Activated CD4-positive, alpha-beta T cell treated with anti-CD3 and anti-CD28 coated beads, Interleukin-2, amount 10 ng/mL, durations not matched to agents 24 days and 14 days (primary cell): ENCODE measurements at regions of chr3 and their contacts with region 1.

Region 1: DNA sequence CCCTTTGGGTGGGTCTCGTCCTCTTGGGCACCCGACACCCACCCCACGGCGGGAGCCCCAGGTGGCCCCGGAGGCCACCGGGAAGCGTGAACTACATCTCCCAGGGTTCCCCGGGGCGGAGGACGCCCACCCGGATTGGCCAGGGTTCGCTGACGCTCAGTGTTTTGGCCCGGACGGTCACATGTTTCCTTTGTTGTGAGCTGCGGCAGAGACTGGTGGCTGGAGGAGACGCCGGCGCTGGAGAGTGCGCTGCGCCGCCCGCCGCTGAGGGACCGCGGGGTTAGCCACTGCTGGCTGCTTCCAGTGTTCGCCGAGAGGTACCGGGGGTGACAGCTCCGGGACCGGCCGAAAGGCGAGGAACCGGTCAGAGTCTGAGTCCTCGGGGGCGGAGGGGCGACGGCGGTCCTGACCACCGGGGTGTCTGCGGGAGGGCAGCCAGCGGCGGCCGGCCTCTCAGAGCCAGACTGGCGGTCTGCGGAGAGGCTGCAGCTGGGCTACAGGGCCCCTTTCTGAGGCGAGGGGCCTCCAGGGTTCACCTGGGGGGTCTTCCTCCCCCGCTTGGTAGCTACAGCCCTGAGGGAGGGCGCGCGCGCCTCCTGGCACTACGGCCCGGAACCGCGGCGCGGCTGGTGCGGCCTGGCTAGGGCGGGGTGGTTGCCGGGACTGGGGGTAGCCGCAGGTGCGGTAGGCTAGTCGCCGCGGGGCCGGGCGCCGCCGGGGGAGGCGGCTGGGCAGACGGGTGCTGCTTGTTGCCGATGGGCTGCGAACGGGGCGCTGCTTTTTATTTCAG is at the start of gene KLHL24:
- DNase-seq: peak; percentile 97
- H3K4me3 Mint-ChIP-seq: peak within 1 kb of the TSS; percentile 94
- H3K27ac Mint-ChIP-seq: peak within 1 kb of the TSS; percentile 96
- H3K4me1 Mint-ChIP-seq: peaks cover 20% of the 10 kb centered on the region
- H3K27me3 Mint-ChIP-seq: no peaks in the 10 kb centered on the region
- total RNA-seq, gene KLHL24: 6.7 and 6.9 TPM in 2 replicates

Region 2: DNA sequence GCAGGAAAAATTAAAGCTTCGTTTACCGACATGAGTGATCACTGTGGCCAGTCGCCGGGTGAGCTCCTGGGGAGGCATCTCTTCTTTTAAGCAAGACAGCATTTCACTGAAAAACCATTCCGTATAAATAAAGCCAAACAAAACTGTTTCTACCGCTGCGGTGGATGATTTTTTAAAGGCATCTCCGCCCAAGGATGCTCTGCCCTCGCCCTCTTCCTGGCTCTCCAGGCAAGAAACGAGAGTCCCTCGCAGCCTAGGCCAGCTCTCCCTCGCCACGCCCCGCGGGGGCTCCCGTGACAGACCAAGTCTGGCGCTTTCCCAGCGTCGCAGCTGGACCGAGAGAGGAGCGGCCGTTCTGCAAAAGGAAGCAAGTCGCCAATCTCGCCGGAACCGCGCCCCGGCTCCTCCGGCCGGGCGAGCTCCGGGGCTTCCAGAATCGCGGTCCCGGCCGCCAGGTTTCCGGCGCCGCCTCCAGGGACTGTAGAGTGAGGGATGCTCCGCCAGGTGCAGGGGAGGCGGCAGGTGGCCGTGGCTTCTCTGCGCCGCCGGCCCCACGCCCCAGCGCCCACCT is 207.7 kb before region 1 on chr3:
- intact Hi-C with region 1: loop called (anchors 5 kb)
- DNase-seq: peak; percentile 82
- H3K4me3 Mint-ChIP-seq: peak overlapping the region; percentile 82
- H3K27ac Mint-ChIP-seq: peak overlapping the region; percentile 57
- H3K4me1 Mint-ChIP-seq: peaks cover 35% of the 10 kb centered on the region
- H3K27me3 Mint-ChIP-seq: peaks cover 2% of the 10 kb centered on the region

Region 3: DNA sequence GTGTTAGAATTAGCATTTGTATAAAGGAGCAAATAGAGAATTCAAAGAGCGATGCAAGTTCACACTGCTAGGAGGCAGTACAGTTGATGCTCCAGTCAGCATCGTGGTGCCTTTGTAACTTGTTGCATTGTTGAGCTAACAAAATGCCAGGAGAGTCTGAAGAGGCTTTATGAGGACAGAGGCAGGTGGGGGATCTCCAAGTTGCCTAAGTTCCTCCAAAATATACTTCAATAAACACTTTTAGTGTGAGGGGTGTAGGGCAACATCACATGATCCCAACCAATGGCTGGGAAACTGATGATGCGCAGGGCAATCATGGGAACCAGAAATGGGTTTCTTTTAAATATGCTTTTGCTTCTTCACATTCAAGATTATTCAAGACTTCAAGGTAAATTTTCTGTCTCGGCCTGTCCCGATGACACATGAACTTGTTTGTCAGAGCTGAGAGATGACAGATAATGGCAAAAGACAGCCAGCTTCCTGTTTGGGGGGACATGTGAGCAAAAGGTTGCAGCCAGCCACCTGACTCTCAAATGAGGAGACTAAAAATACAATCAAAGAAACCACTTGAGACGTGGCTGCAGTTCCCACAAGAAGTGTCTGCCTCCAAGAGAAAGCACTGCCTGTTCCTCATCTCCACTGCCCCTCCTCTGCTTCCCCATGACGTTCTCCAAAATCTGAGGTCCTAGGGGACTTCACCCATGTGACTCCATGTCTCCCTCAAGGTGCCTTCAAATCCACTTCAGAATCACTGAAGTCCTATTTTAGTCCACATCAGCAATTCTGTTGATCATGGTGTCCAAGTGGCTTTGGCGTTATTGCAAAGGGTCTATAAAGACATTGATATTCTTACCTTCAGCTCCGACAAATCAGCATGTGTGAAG is 119.4 kb before region 1 on chr3:
- intact Hi-C with region 1: loop called (anchors 5 kb)
- DNase-seq: peak; percentile 88
- H3K4me3 Mint-ChIP-seq: peak overlapping the region; percentile 39
- H3K27ac Mint-ChIP-seq: peak overlapping the region; percentile 90
- H3K4me1 Mint-ChIP-seq: peaks cover 67% of the 10 kb centered on the region
- H3K27me3 Mint-ChIP-seq: no peaks in the 10 kb centered on the region

Region 4: DNA sequence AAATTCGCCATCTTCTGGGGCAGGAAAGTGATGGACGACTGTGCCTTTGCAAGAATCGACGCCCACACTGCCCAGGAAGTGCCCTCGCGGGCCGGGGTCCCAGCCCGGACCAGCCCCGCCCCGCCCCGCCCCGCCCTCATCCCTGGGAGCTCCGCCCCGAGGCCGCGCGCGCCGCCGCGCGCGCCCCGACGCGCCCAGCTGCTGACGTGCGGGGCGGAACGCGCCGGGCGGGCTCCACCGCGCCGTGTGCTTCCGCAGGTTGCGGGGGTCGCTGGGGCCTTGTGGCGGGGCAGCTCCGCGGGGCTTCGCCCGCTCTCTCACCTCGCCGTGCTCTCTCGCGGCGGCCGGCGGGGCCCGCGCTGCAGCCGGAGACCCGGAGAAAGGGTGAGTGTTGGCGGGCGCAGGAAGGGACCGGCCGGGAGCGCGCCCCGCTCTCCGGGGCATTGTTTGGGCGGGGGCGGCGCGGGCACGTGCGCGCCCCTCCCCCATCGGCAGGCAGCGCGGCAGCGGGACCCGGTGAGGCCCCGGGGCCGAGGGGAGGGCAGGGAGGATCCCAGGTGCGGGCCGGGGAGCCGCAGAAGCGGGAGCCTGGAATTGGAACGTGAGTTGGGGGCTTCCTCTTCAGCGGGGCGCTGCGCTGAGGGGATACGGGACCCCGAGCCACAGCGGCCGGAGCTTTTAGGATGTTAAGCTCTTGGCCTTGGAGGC is 62.1 kb after region 1 on chr3 and contains the start of gene YEATS2:
- intact Hi-C with region 1: loop called (anchors 1 kb)
- DNase-seq: peak; percentile 91
- H3K4me3 Mint-ChIP-seq: peak within 1 kb of the TSS; percentile 92
- H3K27ac Mint-ChIP-seq: peak within 1 kb of the TSS; percentile 85
- H3K4me1 Mint-ChIP-seq: peaks cover 31% of the 10 kb centered on the region
- H3K27me3 Mint-ChIP-seq: no peaks in the 10 kb centered on the region
- total RNA-seq, gene YEATS2: 58.4 and 62.2 TPM in 2 replicates

Region 5: GRCh38 chr3:183766745-183767606 is 131.3 kb after region 1 on chr3:
- intact Hi-C with region 1: loop called (anchors 5 kb)
- DNase-seq: peak; percentile 93
- H3K4me3 Mint-ChIP-seq: no peak overlapping the region
- H3K27ac Mint-ChIP-seq: peak overlapping the region; percentile 37
- H3K4me1 Mint-ChIP-seq: peaks cover 8% of the 10 kb centered on the region
- H3K27me3 Mint-ChIP-seq: no peaks in the 10 kb centered on the region

Region 6: DNA sequence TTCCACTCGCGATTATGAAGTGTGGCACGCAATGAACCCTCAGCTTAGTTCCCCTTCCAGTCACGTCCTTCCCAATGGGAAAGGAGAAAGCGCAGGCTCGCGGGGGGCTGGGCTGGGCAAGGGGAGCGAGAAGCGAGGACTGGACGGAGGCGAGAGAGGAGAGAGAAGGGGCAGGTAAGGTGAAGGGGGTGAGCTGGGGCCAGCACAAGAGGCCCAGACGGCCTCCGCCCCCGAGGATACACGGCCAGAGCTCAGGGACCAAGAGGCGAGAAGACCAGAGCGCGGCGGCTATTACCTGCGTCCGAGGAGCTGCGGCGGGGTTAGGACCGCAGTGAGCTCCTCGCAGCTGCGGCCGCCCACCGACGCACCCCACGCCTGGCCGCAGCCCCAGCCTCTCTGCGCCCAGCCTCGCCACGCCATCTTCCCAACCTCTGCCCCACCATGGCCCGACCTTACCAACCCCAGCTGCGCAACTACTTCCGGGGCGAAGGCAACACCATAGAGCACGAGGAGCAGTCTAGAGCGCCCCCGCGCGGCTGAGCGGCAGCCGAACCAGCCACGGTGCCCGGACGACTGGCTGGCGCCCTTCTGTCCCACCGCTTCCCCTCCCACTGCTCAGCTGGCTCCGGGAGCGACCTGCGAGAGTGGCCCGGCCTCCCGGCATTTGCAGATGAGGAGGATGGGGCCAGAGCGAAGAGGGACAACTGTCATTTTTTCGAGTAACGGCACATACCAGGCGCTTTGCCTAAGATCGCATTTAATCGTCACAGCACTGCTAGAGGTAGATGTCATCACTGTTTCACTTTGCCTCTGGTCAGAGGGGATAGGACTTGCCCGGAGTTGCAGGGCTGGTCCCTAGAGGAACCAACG is 249.0 kb after region 1 on chr3 and contains the start of gene PARL:
- intact Hi-C with region 1: loop called (anchors 1 kb)
- DNase-seq: peak; percentile 99
- H3K4me3 Mint-ChIP-seq: peak within 1 kb of the TSS; percentile 94
- H3K27ac Mint-ChIP-seq: peak within 1 kb of the TSS; percentile 93
- H3K4me1 Mint-ChIP-seq: peaks cover 23% of the 10 kb centered on the region
- H3K27me3 Mint-ChIP-seq: peaks cover 2% of the 10 kb centered on the region
- total RNA-seq, gene PARL: 89.5 and 91.4 TPM in 2 replicates